ENCODE measurements at regions of chr17 and their contacts with region 1.

Region 1: GRCh38 chr17:50956750-50957523 is 90.8 kb upstream of the TOB1 start:
- H3K4me3 ChIP-seq: no peak overlapping the region
- H3K27ac ChIP-seq: no peak overlapping the region
- H3K4me1 ChIP-seq: no peaks in the 10 kb centered on the region; the same call in 1 of the 2 replicates
- CTCF ChIP-seq: peak; percentile 80

Region 2: GRCh38 chr17:50828508-50829170 is 128.3 kb before region 1 on chr17:
- CTCF ChIA-PET with region 1: interaction called, 10 read pairs
- POLR2A ChIA-PET with region 1: no interaction called
- H3K4me3 ChIP-seq: no peak overlapping the region
- H3K27ac ChIP-seq: no peak overlapping the region
- H3K4me1 ChIP-seq: no peaks in the 10 kb centered on the region
- CTCF ChIP-seq: no peak

Region 3: DNA sequence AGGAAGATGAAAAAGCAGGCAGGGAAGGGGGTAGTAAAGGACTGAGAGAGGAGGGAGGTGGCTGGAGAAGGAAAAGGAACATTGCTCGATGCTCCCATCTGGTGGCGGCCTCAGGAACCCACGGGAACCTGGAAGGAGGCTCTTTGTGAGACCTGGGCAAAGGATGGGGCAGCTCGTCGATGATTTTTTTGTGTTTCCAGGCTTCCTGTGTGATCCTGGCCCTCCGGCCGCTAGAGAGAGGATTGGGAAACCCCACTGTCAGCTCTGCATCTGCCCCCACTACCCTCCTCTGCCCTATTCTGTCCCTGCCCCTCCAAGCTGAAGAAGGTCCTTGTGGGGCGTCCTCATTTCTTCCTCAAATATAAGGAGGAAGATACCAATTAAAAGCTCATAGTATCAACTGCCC is 115.0 kb before region 1 on chr17:
- CTCF ChIA-PET with region 1: interaction called, 329 read pairs
- POLR2A ChIA-PET with region 1: no interaction called
- H3K4me3 ChIP-seq: no peak overlapping the region
- H3K27ac ChIP-seq: no peak overlapping the region
- H3K4me1 ChIP-seq: no peaks in the 10 kb centered on the region
- CTCF ChIP-seq: peak; percentile 82

Region 4: GRCh38 chr17:50967795-50968194 is 10.9 kb after region 1 on chr17:
- CTCF ChIA-PET with region 1: interaction called, 31 read pairs
- POLR2A ChIA-PET with region 1: no interaction called
- H3K4me3 ChIP-seq: no peak overlapping the region
- H3K27ac ChIP-seq: no peak overlapping the region
- H3K4me1 ChIP-seq: no peaks in the 10 kb centered on the region
- CTCF ChIP-seq: no peak

Region 5: DNA sequence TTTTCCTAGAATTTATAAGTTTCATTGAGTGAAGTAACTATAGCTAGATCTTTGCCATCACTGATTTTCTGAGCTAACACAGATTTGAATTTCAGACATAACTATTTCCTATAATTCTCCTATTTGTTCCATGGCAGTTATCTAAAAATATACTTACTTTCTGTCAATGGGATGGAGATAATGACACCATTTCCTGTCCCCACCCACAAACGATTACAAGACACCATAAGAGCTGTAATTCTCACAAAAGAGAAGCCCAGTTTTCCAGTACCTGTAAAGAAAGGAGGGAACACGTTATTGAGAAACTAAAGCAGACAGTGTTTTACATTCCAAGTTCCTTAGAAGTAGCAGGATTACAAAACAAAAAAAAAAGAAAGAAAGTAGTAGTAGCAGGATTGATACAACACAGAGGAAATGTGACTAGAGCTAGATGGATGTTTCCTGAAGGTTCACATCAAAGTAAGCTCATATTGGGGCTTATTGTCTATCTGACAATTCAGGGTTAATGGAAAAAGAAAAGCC is 20.1 kb after region 1 on chr17:
- CTCF ChIA-PET with region 1: interaction called, 13 read pairs
- POLR2A ChIA-PET with region 1: no interaction called
- H3K4me3 ChIP-seq: no peak overlapping the region
- H3K27ac ChIP-seq: no peak overlapping the region
- H3K4me1 ChIP-seq: peaks cover 4% of the 10 kb centered on the region; the same call in 1 of the 2 replicates
- CTCF ChIP-seq: no peak

Region 6: DNA sequence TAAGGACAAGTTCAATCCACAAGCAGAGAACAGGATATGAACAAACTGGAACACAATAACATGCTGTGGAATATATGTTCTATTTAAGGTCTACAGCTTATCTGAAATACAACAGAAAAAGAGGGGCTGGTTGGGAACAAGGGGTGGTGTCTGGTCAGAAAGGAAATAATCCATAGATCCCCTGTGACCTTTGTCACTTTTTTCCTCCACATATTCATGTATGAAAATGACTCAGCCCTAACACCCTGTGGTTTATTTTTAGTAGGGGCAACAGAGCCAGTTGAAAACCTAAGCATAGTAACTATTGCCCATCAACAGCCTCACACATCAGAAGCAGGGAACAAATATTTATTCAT is 176.0 kb after region 1 on chr17:
- CTCF ChIA-PET with region 1: no interaction called
- POLR2A ChIA-PET with region 1: no interaction called
- H3K4me3 ChIP-seq: no peak overlapping the region
- H3K27ac ChIP-seq: no peak overlapping the region
- H3K4me1 ChIP-seq: no peaks in the 10 kb centered on the region
- CTCF ChIP-seq: no peak